ENCODE measurements at regions of chr3 and their contacts with region 1.

Region 1: DNA sequence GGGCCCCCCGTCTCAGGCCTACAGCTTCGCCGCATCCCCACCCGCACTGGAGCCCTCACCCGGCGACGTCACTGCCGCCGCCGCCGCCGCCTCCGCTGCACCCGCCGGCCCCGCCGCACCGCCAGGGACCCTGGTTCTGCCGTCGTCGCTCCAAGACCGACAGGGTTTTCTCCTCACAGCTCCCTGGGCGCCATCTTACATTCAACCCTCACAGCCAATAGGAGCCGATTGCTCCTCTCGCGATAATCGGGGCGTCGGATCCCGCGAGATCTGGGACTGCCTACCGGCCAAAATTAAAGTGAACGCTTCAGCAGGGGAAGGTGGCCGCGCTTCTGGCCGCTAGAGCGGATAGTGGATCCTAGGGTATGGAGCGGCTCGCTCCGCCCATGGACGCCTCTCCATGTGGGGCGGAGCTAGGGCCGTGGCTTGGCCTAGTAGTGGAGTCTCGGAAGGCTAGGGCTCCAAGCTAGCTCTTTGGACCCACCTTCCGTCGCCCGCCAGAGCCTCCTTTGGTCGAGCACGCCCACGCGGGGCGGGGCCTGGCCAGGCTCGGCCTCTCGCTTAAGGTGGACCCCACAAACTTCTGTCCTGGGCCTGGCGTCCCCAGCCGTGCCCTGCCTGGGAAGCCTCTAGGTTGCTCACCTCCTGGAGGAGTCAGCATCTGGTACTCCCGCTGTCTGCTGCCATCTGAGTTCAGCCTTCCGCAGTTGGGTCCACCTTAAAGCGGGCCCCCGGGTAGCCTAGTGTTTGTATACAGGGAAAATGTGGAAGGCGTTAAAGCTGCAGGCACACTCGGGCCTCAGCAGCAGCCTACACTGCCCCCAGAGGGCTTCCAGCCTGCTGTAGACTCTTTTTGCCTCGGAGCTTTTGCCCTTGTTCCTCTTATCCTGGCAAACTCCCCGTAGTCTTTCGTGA is at the start of gene QRICH1:
- DNase-seq: peak; percentile 98
- ATAC-seq: peak; percentile 86
- H3K4me3 Mint-ChIP-seq: peak within 1 kb of the TSS; percentile 90
- H3K27ac Mint-ChIP-seq: peak within 1 kb of the TSS; percentile 94
- H3K4me1 Mint-ChIP-seq: peaks cover 33% of the 10 kb centered on the region
- H3K27me3 Mint-ChIP-seq: no peaks in the 10 kb centered on the region
- total RNA-seq, gene QRICH1: 119 to 171 TPM

Region 2: GRCh38 chr3:47781685-47782445 is 1312.2 kb before region 1 on chr3 and contains the start of gene SMARCC1:
- CTCF ChIA-PET with region 1: no interaction called
- POLR2A ChIA-PET with region 1: no interaction called
- intact Hi-C with region 1: loop called in 1 of 2 experiments (anchors 5 kb)
- DNase-seq: peak; percentile 99
- ATAC-seq: peak; percentile 93
- H3K4me3 Mint-ChIP-seq: peak within 1 kb of the TSS; percentile 99
- H3K27ac Mint-ChIP-seq: peak within 1 kb of the TSS; percentile 97
- H3K4me1 Mint-ChIP-seq: peaks cover 21% of the 10 kb centered on the region
- H3K27me3 Mint-ChIP-seq: no peaks in the 10 kb centered on the region
- total RNA-seq, gene SMARCC1: 129 to 130 TPM

Region 3: DNA sequence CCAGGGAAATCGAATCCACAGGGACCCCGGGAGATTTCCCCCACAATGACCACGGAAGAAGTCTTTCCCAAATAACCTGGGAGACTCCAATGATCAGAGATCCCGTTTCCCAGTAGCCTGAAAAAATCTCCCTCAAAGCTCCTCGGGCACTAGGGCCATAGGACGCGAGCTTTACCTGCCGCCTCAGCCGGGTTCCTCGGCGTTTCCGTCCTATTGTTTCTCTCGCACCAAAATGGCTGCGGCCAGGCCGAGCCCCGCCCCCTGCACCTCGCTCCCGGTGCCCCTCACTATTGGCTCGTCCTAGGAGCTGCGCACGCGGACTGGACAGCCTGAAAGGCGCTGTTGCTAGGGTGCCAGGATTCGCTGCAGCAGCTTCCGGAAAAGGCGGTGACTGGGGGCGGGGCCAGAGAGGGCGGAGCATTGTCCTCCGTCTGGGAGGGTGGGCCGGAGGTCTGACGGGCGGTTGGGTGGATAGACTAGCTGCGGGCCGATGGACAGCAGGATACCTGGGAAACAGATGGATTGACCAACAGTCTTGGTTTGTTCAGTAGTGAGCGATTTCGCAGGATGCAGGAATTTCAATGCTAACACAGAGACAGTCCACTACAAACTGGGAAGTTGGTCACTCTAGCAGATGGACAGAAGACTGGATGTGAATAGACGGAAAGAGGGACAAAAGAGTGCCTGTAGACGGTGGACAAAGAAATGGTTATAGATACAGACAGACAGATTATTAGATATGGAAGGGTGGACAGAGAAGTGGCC is 376.9 kb before region 1 on chr3 and contains the start of gene IP6K2:
- CTCF ChIA-PET with region 1: no interaction called
- POLR2A ChIA-PET with region 1: interaction called, 4 read pairs
- intact Hi-C with region 1: loop called in 1 of 2 experiments (anchors 1 kb)
- DNase-seq: peak; percentile 99
- ATAC-seq: peak; percentile 100
- H3K4me3 Mint-ChIP-seq: peak within 1 kb of the TSS; percentile 97
- H3K27ac Mint-ChIP-seq: peak within 1 kb of the TSS; percentile 97
- H3K4me1 Mint-ChIP-seq: peaks cover 31% of the 10 kb centered on the region
- H3K27me3 Mint-ChIP-seq: no peaks in the 10 kb centered on the region
- total RNA-seq, gene IP6K2: 39.4 to 48.3 TPM

Region 4: GRCh38 chr3:49007068-49007770 is 86.9 kb before region 1 on chr3 and contains the start of gene WDR6:
- CTCF ChIA-PET with region 1: interaction called, 3 read pairs
- POLR2A ChIA-PET with region 1: interaction called, 21 read pairs
- intact Hi-C with region 1: loop called in 1 of 2 experiments (anchors 1 kb)
- DNase-seq: peak; percentile 99
- ATAC-seq: peak; percentile 90
- H3K4me3 Mint-ChIP-seq: peak within 1 kb of the TSS; percentile 100
- H3K27ac Mint-ChIP-seq: peak within 1 kb of the TSS; percentile 100
- H3K4me1 Mint-ChIP-seq: peaks cover 16% of the 10 kb centered on the region
- H3K27me3 Mint-ChIP-seq: no peaks in the 10 kb centered on the region
- total RNA-seq, gene WDR6: 109 to 127 TPM

Region 5: DNA sequence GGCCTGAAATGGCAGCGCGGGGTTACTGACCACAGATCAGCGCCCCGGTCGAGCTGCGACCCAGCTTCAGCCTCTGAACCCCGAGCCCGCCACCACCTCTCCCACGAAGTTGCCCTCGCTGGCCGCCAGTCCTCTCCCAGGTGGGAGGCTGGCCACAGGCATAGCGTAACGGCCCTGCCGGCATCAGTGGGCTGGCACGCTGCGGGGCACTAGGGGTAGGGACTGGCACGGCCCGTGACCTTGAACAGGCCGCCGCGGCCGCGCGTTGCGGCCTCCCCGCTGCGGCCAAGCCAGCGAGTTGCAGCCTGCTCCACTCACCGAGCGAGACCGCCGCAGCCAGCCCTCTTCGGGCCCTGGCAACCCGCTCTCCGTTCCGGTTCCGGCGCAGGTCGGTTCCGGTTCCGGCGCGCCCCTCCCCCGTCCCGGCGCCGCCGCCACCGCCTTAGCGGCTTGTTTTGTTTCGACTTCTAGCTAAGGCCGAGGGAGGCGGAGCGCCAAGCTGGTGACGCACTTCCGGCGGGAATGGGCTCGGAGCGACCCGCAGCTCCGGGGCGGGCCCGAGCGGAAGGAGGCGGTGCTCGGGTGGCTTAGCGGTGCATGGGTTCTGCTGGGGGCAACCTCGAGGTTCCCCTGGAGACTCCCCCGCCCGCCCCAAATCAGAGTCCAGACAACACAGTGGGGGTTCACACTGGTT is 26.5 kb after region 1 on chr3 and contains the start of gene USP19:
- CTCF ChIA-PET with region 1: interaction called, 26 read pairs
- POLR2A ChIA-PET with region 1: interaction called, 22 read pairs
- intact Hi-C with region 1: loop called (anchors 1 kb)
- DNase-seq: peak; percentile 97
- ATAC-seq: peak; percentile 97
- H3K4me3 Mint-ChIP-seq: peak within 1 kb of the TSS; percentile 87
- H3K27ac Mint-ChIP-seq: peak within 1 kb of the TSS; percentile 88
- H3K4me1 Mint-ChIP-seq: peaks cover 19% of the 10 kb centered on the region
- H3K27me3 Mint-ChIP-seq: no peaks in the 10 kb centered on the region
- total RNA-seq, gene USP19: 45.2 to 45.9 TPM

Region 6: DNA sequence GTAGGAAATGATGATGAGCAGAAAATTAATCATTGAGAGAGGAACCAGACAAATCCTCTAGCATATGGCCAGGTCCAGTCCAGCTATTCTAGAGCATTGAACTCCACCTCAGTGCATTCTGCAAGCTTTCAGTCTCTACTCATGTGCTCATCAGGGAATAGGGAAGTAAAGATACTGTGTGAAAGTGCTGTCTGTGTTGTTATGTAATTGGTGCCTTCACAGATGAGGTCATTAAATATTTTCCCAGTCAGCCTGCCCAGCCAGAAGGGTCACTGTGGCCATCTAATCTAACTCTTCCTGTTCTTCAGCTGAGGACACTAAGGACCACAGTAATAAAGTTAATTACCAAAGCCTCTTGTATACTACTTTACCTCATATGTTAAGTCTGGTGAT is 154.7 kb after region 1 on chr3:
- CTCF ChIA-PET with region 1: no interaction called
- POLR2A ChIA-PET with region 1: no interaction called
- intact Hi-C with region 1: no loop called
- DNase-seq: no peak
- ATAC-seq: no peak
- H3K4me3 Mint-ChIP-seq: no peak overlapping the region
- H3K27ac Mint-ChIP-seq: no peak overlapping the region
- H3K4me1 Mint-ChIP-seq: no peaks in the 10 kb centered on the region
- H3K27me3 Mint-ChIP-seq: no peaks in the 10 kb centered on the region

Region 7: DNA sequence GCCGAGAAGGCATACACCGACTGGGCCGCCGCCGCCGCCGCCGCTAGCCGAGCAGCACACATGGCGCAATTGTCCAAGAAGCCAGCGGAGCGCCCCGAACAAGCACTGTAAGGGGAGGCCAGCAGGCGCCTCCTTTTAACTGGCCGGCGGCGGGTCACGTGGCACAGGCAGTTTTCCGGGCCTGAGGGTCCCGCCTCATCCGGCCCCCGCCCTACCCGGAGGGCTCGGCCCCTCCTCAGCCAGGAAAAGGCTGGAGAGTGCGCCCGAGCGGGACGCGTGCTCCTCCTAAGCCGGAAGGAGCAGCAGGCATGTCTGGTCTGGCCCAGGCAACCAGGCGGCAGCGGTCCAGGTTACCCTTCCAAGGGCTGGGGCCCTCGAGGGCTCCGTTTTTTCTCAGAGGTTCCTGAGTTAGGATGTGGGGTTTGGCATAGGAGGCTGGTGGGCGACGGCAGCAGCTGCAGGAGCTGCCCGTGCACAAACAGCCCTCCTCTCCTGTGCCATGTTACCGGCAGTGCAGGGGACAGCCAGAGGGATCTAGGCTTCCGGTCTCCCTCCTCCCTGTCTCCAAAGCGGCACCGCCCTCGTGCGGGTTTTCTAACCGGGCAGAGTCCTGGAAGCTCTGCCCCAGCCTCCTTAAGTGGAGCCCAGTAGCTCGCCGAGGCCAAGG is 264.2 kb after region 1 on chr3 and contains the start of gene GPX1:
- CTCF ChIA-PET with region 1: no interaction called
- POLR2A ChIA-PET with region 1: no interaction called
- intact Hi-C with region 1: loop called in 1 of 2 experiments (anchors 1 kb)
- DNase-seq: peak; percentile 92
- ATAC-seq: peak; percentile 85
- H3K4me3 Mint-ChIP-seq: peak within 1 kb of the TSS; percentile 94
- H3K27ac Mint-ChIP-seq: peak within 1 kb of the TSS; percentile 98
- H3K4me1 Mint-ChIP-seq: peaks cover 18% of the 10 kb centered on the region
- H3K27me3 Mint-ChIP-seq: no peaks in the 10 kb centered on the region
- total RNA-seq, gene GPX1: 182 to 306 TPM